ENCODE measurements at regions of chr12 and their contacts with region 1.

Region 1: GRCh38 chr12:1939801-1940607 is 21.6 kb upstream of the CACNA2D4 start:
- DNase-seq: peak; percentile 79 to 93 (median 92)
- H3K4me3 ChIP-seq: peak overlapping the region; percentile 8
- H3K27ac ChIP-seq: no peak overlapping the region
- H3K4me1 ChIP-seq: peaks cover 8% of the 10 kb centered on the region
- H3K27me3 ChIP-seq: no peaks in the 10 kb centered on the region
- CTCF ChIP-seq: peak; percentile 81 to 90 (median 89)
- EP300 ChIP-seq: no peak
- POLR2A ChIP-seq: peak; percentile 11

Region 2: GRCh38 chr12:1634590-1635191 is 305.3 kb before region 1 on chr12:
- intact Hi-C with region 1: loop called in 1 of 4 experiments (anchors 10 kb)
- DNase-seq: peak; percentile 77 to 88 (median 82)
- H3K4me3 ChIP-seq: no peak overlapping the region
- H3K27ac ChIP-seq: no peak overlapping the region
- H3K4me1 ChIP-seq: no peaks in the 10 kb centered on the region
- H3K27me3 ChIP-seq: no peaks in the 10 kb centered on the region
- CTCF ChIP-seq: peak; percentile 63 to 68 (median 64)
- EP300 ChIP-seq: no peak
- POLR2A ChIP-seq: no peak

Region 3: DNA sequence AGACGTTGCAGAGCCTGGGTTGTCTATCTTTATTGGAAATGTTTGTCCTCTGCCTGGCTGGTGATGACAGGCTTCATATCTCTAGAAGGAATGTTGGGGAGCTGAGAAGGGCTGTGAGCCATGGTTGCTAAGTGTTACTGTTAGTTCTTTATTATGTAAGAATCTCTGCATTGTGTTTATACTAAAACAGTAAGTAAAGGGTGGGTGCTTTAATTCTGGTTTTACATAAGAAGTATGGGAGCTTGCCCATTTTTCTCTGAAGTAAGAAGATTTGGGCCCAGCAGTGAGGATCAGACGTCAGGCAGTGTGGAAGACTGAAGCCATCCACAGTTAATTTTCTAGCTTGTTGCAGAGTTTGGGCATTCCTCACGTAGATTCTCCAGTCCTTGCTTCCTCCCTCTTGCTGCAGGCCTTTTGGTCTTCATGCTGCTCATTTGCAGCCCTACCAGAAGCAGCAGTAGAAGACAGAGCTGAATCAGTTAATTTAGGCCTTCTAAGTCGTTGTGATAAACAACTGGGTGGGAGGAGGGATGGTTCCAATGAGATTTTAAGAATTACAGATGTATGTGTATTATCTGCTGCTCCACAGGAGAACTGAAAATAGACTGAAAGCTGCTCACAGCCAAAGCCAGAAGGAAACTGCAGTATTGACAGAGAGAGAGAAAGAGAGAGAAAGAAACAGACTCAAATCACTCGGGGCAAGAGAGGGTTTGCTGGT is 289.6 kb before region 1 on chr12:
- intact Hi-C with region 1: loop called in 2 of 4 experiments (anchors 5 to 10 kb)
- DNase-seq: no peak
- H3K4me3 ChIP-seq: no peak overlapping the region
- H3K27ac ChIP-seq: peak overlapping the region; percentile 44 to 79
- H3K4me1 ChIP-seq: peaks cover 4% of the 10 kb centered on the region
- H3K27me3 ChIP-seq: no peaks in the 10 kb centered on the region
- CTCF ChIP-seq: no peak
- EP300 ChIP-seq: no peak
- POLR2A ChIP-seq: no peak

Region 4: DNA sequence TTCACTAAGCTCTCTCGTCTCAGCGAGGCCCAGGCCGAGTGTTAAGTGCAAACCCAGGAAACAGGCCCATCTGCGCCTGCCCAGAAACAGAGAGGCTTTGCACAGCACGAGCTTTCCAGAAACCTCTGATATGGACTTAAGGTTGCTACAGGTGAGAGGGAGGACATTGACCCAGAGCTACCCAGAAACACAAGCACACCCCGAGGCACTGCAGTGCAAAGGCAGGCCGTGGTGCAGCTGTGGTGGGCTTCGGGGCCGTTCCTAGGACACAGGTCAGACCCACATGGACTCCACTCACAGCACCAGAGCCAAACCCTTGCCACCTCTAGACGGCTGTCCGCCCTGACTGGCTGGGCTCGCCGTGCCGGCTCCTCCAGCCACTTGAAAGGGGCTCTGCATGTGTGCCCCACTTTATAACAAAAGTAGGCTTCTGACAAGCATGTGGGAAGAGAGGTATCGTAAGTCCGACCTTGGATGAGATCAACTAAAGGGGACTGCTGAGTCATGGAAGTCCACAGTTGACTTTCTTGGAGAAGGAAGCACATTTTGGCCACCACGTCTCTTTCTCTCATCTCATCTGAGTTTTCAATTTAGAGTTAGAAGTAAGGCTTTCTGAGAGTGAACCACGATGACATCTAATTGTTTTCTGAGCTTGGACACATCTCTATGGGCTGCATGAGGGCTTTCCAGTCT is 59.7 kb before region 1 on chr12:
- intact Hi-C with region 1: no loop called
- DNase-seq: no peak
- H3K4me3 ChIP-seq: no peak overlapping the region
- H3K27ac ChIP-seq: no peak overlapping the region
- H3K4me1 ChIP-seq: no peaks in the 10 kb centered on the region
- H3K27me3 ChIP-seq: no peaks in the 10 kb centered on the region
- CTCF ChIP-seq: no peak
- EP300 ChIP-seq: no peak
- POLR2A ChIP-seq: no peak

Measured in ovary (tissue), 10 donors.